Sigmoid colon (tissue), 7 donors: ENCODE measurements at regions of chr12 and their contacts with region 1.

Region 1: GRCh38 chr12:115916910-115917668 is 360.4 kb downstream of the MED13L start:
- DNase-seq: peak; percentile 65
- H3K4me3 ChIP-seq: peak overlapping the region in 1 of 4 donors; percentile 17
- H3K27ac ChIP-seq: no peak overlapping the region
- H3K4me1 ChIP-seq: peaks cover 0 to 5% (median 4%) of the 10 kb centered on the region in 4 donors
- H3K27me3 ChIP-seq: peaks cover 4 to 41% (median 5%) of the 10 kb centered on the region in 3 donors
- CTCF ChIP-seq: peak; percentile 84 to 96 (median 91)
- EP300 ChIP-seq: no peak
- POLR2A ChIP-seq: no peak

Region 2: GRCh38 chr12:113980537-113981337 is 1936.4 kb before region 1 on chr12:
- intact Hi-C with region 1: loop called (anchors 2 kb)
- DNase-seq: no peak
- H3K4me3 ChIP-seq: no peak overlapping the region
- H3K27ac ChIP-seq: no peak overlapping the region
- H3K4me1 ChIP-seq: no peaks in the 10 kb centered on the region
- H3K27me3 ChIP-seq: peaks cover 0 to 46% (median 17%) of the 10 kb centered on the region in 3 donors
- CTCF ChIP-seq: peak; percentile 67 to 90 (median 82)
- EP300 ChIP-seq: no peak
- POLR2A ChIP-seq: no peak

Region 3: DNA sequence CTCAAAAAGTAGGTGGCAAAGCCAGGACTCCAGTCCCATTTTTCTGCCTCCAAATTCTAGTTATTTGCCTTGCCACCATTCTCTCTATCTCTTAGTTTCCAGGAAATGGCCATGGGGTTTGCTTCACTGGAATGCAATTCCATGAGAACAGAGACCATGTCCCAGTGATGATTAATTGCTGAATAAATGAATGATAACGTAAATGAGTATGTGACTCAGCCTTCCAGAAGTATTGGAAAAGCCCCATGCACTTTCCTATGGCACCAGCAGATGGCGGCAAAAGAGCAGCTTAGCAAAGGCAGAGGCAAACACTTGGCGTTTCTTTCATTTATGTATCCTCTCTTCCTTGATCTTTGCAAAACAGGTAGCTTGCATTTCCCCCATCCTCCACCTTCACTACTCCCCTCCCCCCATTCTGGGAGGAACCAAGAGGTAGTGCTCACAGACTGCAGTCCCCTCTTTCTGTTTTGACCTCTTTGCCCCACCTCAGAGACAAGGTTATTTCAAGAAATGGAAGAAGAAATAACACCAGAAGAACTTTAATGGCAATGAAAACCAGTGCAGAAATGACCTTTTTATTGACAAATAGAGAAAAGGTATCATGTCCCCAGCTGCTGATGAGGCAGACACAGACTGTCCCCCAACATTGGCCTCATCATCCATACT is 1254.4 kb before region 1 on chr12:
- intact Hi-C with region 1: loop called (anchors 1 kb)
- DNase-seq: peak; percentile 82
- H3K4me3 ChIP-seq: no peak overlapping the region
- H3K27ac ChIP-seq: no peak overlapping the region
- H3K4me1 ChIP-seq: peaks cover 0 to 10% (median 5%) of the 10 kb centered on the region in 4 donors
- H3K27me3 ChIP-seq: peaks cover 24 to 59% (median 44%) of the 10 kb centered on the region in 3 donors
- CTCF ChIP-seq: peak; percentile 86 to 92 (median 87)
- EP300 ChIP-seq: no peak
- POLR2A ChIP-seq: no peak

Region 4: DNA sequence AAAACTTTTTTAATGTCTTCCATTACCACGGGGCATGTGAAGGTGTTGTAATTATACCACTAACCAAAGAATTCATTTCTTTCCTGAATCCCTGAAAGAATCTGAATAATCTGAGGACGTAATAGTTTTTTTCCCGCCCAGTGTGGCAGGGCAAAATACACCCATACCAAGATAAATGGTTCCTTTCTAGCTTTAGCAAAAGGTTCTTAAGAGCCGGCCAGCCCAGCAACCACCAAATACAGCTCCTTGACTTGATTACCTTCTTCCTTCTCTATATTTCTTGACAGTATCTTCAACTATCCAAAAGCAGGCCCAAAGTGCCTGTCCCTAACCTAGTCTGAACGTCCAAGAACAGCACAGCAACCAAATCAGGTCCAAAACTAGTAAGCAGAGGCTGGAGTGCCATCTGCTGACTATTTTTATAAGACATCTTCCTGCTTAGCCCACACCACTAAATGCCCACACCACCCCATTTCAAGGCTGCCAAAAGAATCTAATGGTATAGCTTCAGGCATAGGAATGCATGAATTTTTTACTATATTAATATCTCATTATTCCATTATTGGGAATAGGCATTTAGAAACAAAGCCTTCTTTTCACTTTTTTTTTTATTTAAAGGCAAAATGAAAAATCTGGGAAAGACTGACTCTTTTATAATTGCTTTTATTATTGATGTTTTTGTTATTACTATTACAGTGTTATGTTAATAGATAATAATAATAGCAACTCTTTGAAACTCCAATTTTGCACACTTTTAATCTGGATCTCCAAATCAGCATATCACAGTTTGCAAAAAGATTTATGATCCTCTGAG is 164.0 kb before region 1 on chr12:
- intact Hi-C with region 1: loop called (anchors 5 kb)
- DNase-seq: no peak
- H3K4me3 ChIP-seq: no peak overlapping the region
- H3K27ac ChIP-seq: no peak overlapping the region
- H3K4me1 ChIP-seq: no peaks in the 10 kb centered on the region
- H3K27me3 ChIP-seq: peaks cover 0 to 45% (median 4%) of the 10 kb centered on the region in 3 donors
- CTCF ChIP-seq: peak; percentile 44 to 72 (median 59)
- EP300 ChIP-seq: no peak
- POLR2A ChIP-seq: no peak

Region 5: GRCh38 chr12:115998119-115998633 is 81.1 kb after region 1 on chr12:
- intact Hi-C with region 1: no loop called
- DNase-seq: no peak
- H3K4me3 ChIP-seq: no peak overlapping the region
- H3K27ac ChIP-seq: peak overlapping the region in 3 of 4 donors; percentile 49 to 59 (median 59)
- H3K4me1 ChIP-seq: peaks cover 0 to 23% (median 16%) of the 10 kb centered on the region in 4 donors
- H3K27me3 ChIP-seq: no peaks in the 10 kb centered on the region
- CTCF ChIP-seq: peak; percentile 52 to 88 (median 70)
- EP300 ChIP-seq: no peak
- POLR2A ChIP-seq: no peak